ENCODE measurements at regions of chr5 and their contacts with region 1.

Region 1: DNA sequence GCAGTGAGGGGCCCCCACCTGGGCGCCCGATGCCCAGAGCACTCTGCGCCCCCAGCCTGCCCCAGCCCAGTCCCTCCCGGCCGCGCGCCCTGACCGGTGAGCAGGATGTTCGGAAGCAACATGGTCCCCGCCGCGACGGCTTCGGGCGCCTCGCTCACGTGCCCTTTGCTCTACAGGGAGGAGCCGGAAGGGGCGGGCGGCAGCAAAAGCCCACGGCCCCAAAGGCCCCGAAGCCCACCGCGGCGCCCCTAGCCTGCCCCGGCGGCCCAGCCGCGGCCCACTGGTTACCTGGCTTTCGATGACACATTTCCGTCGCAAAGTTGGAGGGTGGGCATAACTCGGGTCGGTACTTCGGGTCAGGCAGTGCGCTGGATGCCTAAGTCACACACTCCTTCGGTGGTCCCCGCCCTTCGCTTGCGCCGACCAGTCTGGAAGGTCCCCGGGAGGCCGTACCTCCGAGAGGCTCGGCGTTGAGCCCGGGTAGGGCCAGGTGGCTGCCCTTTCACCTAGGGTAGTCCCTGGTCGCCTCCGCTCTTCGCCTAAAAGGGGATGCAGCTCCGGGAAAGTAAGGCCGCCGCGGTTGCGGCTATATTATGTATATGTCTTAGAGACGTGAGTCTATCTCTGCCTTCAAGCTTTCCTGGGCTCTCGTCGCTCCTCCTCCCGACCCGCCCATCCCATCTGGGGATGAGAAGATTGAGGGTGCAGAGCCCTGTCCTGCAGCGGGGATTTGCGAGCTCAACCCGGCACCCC is at the starts of genes AK6, RAD17 and TAF9:
- DNase-seq: peak; percentile 76
- ATAC-seq: peak; percentile 91
- H3K4me3 ChIP-seq: peak within 1 kb of the TSS; percentile 93
- H3K27ac ChIP-seq: peak within 1 kb of the TSS; percentile 99
- H3K4me1 ChIP-seq: peaks cover 2% of the 10 kb centered on the region
- H3K27me3 ChIP-seq: no peaks in the 10 kb centered on the region
- CTCF ChIP-seq: no peak
- EP300 ChIP-seq: peak in 1 of 2 experiments; percentile 49; a peak in 1 of 4 replicates
- POLR2A ChIP-seq: peak; percentile 90
- RAD21 ChIP-seq: no peak
- polyA plus RNA-seq, gene AK6: 396 to 446 TPM
- polyA plus RNA-seq, gene RAD17: 23.9 to 30.8 TPM
- polyA plus RNA-seq, gene TAF9: 191 to 318 TPM

Region 2: GRCh38 chr5:69166686-69167492 is 202.7 kb before region 1 on chr5 and contains the start of gene CCNB1:
- CTCF ChIA-PET with region 1: no interaction called
- POLR2A ChIA-PET with region 1: no interaction called
- RAD21 ChIA-PET with region 1: no interaction called
- SMC1A ChIA-PET with region 1: interaction called, 3 read pairs
- in situ Hi-C with region 1: no loop called
- intact Hi-C with region 1: loop called (anchors 10 kb)
- DNase-seq: peak; percentile 95
- ATAC-seq: peak; percentile 99
- H3K4me3 ChIP-seq: peak within 1 kb of the TSS; percentile 86
- H3K27ac ChIP-seq: peak within 1 kb of the TSS; percentile 65
- H3K4me1 ChIP-seq: no peaks in the 10 kb centered on the region
- H3K27me3 ChIP-seq: no peaks in the 10 kb centered on the region
- CTCF ChIP-seq: 0 out of 6 replicates have a peak, but pooled peaks of 1 of the 3 experiments have one; percentile 3
- EP300 ChIP-seq: no peak
- POLR2A ChIP-seq: peak; percentile 90
- RAD21 ChIP-seq: no peak
- polyA plus RNA-seq, gene CCNB1: 312 to 375 TPM

Region 3: DNA sequence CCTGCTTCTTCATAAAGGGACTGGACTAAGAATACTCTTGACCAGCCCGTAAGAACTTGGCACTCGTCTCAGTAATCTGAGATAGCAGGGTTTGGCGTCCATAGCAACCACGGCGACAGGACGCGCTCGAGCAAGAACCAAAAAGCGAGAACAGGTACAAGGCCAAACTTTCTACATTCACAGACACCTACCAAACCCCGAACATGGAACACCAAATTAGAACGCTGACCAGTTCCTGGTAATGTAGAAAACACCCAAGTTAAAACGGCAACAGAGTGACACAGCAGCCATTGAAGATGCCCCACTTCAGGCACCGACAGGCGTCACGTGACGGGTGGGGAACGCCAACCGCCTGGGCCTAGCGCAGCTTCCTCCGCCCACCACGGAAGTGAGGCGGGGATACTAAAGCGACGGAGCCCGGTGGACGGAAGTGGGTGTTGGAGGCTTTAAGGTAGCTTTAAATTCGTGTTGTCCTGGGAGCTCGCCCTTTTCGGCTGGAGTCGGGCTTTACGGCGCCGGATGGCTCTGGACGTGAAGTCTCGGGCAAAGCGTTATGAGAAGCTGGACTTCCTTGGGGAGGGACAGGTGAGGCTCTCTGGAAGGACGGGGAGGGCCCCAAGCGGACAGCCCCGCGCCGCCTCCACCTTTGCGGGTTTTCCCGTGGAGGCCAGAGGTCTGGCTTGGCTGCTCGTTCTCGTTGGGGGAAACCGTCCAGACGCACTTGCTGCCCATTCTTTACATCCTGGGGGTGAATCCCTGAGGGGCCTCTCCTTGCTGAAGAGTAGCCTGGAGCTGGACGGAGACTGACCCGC is 134.9 kb before region 1 on chr5 and contains the start of gene CDK7:
- CTCF ChIA-PET with region 1: no interaction called
- POLR2A ChIA-PET with region 1: interaction called, 4 read pairs
- RAD21 ChIA-PET with region 1: interaction called, 3 read pairs
- SMC1A ChIA-PET with region 1: interaction called, 3 read pairs
- in situ Hi-C with region 1: no loop called
- intact Hi-C with region 1: loop called (anchors 10 kb)
- DNase-seq: peak; percentile 77
- ATAC-seq: peak; percentile 99
- H3K4me3 ChIP-seq: peak within 1 kb of the TSS; percentile 78
- H3K27ac ChIP-seq: peak within 1 kb of the TSS; percentile 84
- H3K4me1 ChIP-seq: no peaks in the 10 kb centered on the region; the same call in 1 of the 2 replicates
- H3K27me3 ChIP-seq: no peaks in the 10 kb centered on the region
- CTCF ChIP-seq: no peak
- EP300 ChIP-seq: no peak
- POLR2A ChIP-seq: peak; percentile 88
- RAD21 ChIP-seq: no peak
- polyA plus RNA-seq, gene CDK7: 80.3 to 93.9 TPM

Region 4: GRCh38 chr5:69265931-69266330 is 103.6 kb before region 1 on chr5:
- CTCF ChIA-PET with region 1: no interaction called
- POLR2A ChIA-PET with region 1: no interaction called
- RAD21 ChIA-PET with region 1: no interaction called
- SMC1A ChIA-PET with region 1: interaction called, 3 read pairs
- in situ Hi-C with region 1: no loop called
- intact Hi-C with region 1: loop called (anchors 10 kb)
- DNase-seq: no peak
- ATAC-seq: peak; percentile 61
- H3K4me3 ChIP-seq: no peak overlapping the region
- H3K27ac ChIP-seq: no peak overlapping the region
- H3K4me1 ChIP-seq: no peaks in the 10 kb centered on the region
- H3K27me3 ChIP-seq: no peaks in the 10 kb centered on the region
- CTCF ChIP-seq: peak; percentile 10 to 20 (median 16); a peak in 2 of 6 replicates
- EP300 ChIP-seq: no peak
- POLR2A ChIP-seq: no peak
- RAD21 ChIP-seq: no peak

Region 5: DNA sequence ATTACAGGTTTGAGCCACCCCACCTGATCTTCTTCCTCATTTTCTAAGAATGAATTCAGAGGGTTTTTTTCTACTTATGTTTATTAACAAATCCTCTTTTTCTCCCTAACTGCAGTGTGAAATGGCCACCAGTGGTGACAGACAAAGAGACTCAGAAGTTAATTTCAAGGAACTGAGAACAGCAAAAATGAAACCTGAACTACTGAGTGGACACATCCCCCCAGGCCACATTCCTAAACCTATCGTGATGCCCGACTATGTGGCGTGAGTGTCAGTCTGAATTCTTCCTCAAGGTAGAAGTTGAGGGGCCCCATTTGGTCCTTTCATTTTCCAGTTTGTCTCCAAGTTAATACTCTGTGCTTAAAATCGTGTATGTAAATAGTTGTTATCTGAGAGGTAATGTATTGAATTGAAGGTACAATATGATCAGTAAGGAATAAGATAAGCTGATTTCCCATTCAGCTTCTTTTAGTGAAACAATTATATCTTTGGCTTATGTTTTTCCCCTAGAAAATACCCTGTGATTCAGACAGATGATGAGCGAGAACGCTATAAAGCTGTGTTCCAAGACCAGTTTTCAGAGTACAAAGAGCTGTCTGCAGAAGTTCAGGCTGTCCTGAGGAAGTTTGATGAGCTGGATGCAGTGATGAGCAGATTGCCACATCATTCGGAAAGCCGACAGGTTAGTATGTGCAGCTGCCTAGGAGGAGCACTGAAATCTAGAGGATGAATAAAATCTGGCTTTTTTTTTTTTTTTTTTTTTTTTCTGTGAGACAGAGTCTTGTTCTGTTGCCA is 63.1 kb after region 1 on chr5:
- CTCF ChIA-PET with region 1: no interaction called
- POLR2A ChIA-PET with region 1: interaction called, 9 read pairs
- RAD21 ChIA-PET with region 1: interaction called, 3 read pairs
- SMC1A ChIA-PET with region 1: interaction called, 5 read pairs
- in situ Hi-C with region 1: no loop called
- intact Hi-C with region 1: loop called (anchors 10 kb)
- DNase-seq: peak; percentile 64
- ATAC-seq: peak; percentile 90
- H3K4me3 ChIP-seq: peak overlapping the region; percentile 31
- H3K27ac ChIP-seq: peak overlapping the region; percentile 76
- H3K4me1 ChIP-seq: peaks cover 9% of the 10 kb centered on the region; the same call in 1 of the 2 replicates
- H3K27me3 ChIP-seq: no peaks in the 10 kb centered on the region
- CTCF ChIP-seq: no peak
- EP300 ChIP-seq: peak in 1 of 2 experiments; percentile 68; a peak in 2 of 4 replicates
- POLR2A ChIP-seq: no peak
- RAD21 ChIP-seq: peak; percentile 30; the same call in 1 of the 2 replicates

Region 6: GRCh38 chr5:69492391-69492922 is 122.9 kb after region 1 on chr5 and contains the start of gene OCLN:
- CTCF ChIA-PET with region 1: no interaction called
- POLR2A ChIA-PET with region 1: no interaction called
- RAD21 ChIA-PET with region 1: no interaction called
- SMC1A ChIA-PET with region 1: interaction called, 3 read pairs
- in situ Hi-C with region 1: no loop called
- intact Hi-C with region 1: loop called (anchors 10 kb)
- DNase-seq: no peak
- ATAC-seq: peak; percentile 80
- H3K4me3 ChIP-seq: peak within 1 kb of the TSS; percentile 97
- H3K27ac ChIP-seq: peak within 1 kb of the TSS; percentile 57
- H3K4me1 ChIP-seq: peaks cover 7% of the 10 kb centered on the region; the same call in 1 of the 2 replicates
- H3K27me3 ChIP-seq: no peaks in the 10 kb centered on the region; a peak in 1 of 4 replicates
- CTCF ChIP-seq: no peak
- EP300 ChIP-seq: no peak
- POLR2A ChIP-seq: peak; percentile 81
- RAD21 ChIP-seq: 0 out of 2 replicates have a peak, but pooled peaks have one; percentile 0
- polyA plus RNA-seq, gene OCLN: 4.7 to 8.9 TPM

Measured in GM12878 (cell line).